HEK293 (cell line): ENCODE measurements at regions of chr16 and their contacts with region 1.

Region 1: GRCh38 chr16:66357153-66357928 is 9.2 kb upstream of the CDH5 start:
- H3K4me3 ChIP-seq: no peak overlapping the region
- H3K27ac ChIP-seq: no peak overlapping the region
- H3K4me1 ChIP-seq: no peaks in the 10 kb centered on the region
- CTCF ChIP-seq: peak; percentile 30; the same call in 1 of the 2 replicates

Region 2: DNA sequence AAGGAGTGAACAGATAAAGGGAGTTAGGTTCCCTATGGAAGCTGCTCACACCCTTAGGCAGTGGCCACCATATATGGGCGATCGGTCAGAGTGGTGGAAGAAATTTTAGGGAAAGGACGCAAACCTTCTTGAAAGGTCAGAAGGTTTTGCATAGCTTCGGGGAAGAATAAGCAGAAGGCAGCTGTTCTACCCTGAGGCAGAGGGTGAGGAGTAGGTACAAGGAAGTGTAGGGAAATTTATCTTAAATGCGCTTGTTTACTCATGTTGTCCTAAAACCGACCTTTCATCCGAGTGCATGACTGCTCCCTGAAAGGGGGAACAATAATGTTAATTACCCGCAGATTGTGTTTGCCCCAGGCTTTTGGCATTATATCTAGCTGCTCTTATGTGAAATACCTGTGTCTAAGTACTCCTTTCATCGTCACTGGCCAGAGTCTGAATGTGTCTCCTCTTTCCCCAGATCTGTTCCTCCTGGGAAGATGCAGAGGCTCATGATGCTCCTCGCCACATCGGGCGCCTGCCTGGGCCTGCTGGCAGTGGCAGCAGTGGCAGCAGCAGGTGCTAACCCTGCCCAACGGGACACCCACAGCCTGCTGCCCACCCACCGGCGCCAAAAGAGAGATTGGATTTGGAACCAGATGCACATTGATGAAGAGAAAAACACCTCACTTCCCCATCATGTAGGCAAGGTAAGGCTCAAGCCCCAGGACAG is 21.7 kb after region 1 on chr16:
- CTCF ChIA-PET with region 1: interaction called, 10 read pairs
- POLR2A ChIA-PET with region 1: no interaction called
- H3K4me3 ChIP-seq: no peak overlapping the region
- H3K27ac ChIP-seq: no peak overlapping the region
- H3K4me1 ChIP-seq: peaks cover 5% of the 10 kb centered on the region; the same call in 1 of the 2 replicates
- CTCF ChIP-seq: no peak

Region 3: GRCh38 chr16:66386629-66387622 is 29.6 kb after region 1 on chr16:
- CTCF ChIA-PET with region 1: interaction called, 11 read pairs
- POLR2A ChIA-PET with region 1: no interaction called
- H3K4me3 ChIP-seq: no peak overlapping the region
- H3K27ac ChIP-seq: no peak overlapping the region
- H3K4me1 ChIP-seq: peaks cover 5% of the 10 kb centered on the region; the same call in 1 of the 2 replicates
- CTCF ChIP-seq: no peak

Region 4: GRCh38 chr16:66437391-66437945 is 80.1 kb after region 1 on chr16:
- CTCF ChIA-PET with region 1: no interaction called
- POLR2A ChIA-PET with region 1: no interaction called
- H3K4me3 ChIP-seq: no peak overlapping the region
- H3K27ac ChIP-seq: no peak overlapping the region
- H3K4me1 ChIP-seq: no peaks in the 10 kb centered on the region
- CTCF ChIP-seq: no peak